ENCODE measurements at regions of chr1 and their contacts with region 1.

Region 1: GRCh38 chr1:114282751-114283403 is 129.2 kb upstream of the SYT6 start:
- DNase-seq: peak; percentile 84 to 90
- H3K4me3 ChIP-seq: no peak overlapping the region
- H3K27ac ChIP-seq: no peak overlapping the region
- H3K4me1 ChIP-seq: no peaks in the 10 kb centered on the region
- H3K27me3 ChIP-seq: no peaks in the 10 kb centered on the region
- CTCF ChIP-seq: peak; percentile 46 to 90 (median 78)
- POLR2A ChIP-seq: no peak

Region 2: DNA sequence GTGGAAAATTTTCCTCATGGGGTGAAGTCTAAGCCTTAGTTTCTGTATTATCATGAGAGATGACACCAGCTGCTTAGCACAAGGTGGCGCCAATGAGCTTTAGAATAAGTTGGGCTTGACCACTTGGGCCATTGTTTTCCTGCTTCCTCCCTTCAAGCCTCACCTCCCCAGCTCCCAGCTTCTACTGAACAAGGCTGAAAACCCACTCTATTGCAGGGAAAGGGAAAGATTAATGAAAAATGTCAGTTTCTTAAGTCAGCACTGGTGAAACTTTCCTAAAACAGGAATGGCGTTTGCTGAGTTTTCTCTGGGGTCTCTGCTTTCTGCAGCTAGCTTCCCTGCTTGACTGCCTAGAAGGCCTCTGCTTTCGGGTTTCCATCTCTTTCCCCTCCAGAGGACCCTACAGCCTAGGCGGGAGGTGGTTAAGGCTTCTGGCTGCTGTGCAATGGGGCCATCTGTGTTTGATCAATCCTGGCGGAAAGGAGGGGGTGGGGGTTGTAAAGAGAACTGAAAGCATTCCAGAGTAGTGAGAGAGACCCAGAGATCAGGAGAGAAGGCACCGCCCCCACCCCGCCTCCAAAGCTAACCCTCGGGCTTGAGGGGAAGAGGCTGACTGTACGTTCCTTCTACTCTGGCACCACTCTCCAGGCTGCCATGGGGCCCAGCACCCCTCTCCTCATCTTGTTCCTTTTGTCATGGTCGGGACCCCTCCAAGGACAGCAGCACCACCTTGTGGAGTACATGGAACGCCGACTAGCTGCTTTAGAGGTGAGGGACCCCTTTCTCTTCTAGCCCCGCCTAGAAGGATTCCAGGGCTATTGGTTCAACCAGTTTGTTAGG is 303.8 kb before region 1 on chr1 and contains the start of gene OLFML3:
- intact Hi-C with region 1: loop called (anchors 5 kb)
- DNase-seq: peak; percentile 87 to 92
- H3K4me3 ChIP-seq: no peak within 1 kb of the TSS
- H3K27ac ChIP-seq: peak within 1 kb of the TSS in 2 of 3 donors; percentile 38 to 56
- H3K4me1 ChIP-seq: peaks cover 41 to 57% of the 10 kb centered on the region in 2 donors
- H3K27me3 ChIP-seq: no peaks in the 10 kb centered on the region
- CTCF ChIP-seq: peak; percentile 53 to 84 (median 62)
- POLR2A ChIP-seq: no peak
- total RNA-seq, gene OLFML3: 20.2 to 28.3 (median 24.8) TPM

Region 3: DNA sequence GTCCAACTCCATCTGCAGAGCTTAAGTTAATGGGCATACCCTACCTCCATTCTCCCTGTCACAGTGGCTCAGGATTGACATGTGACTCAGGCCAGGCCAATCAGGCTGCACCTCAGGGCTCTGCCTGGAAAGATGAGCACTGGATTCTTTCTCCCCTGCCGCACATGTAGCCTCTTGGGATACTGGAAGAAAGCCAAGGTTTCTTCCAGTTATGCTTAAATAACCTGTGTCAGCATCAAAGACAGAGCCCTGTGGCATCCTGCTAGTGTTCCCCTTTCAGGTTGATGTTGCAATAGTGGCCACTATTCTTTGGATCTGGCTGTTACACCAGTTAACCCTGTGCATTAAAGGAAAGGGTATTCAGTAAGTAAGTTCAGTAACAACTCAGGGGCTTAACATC is 74.1 kb before region 1 on chr1:
- intact Hi-C with region 1: no loop called
- DNase-seq: no peak
- H3K4me3 ChIP-seq: no peak overlapping the region
- H3K27ac ChIP-seq: no peak overlapping the region
- H3K4me1 ChIP-seq: no peaks in the 10 kb centered on the region
- H3K27me3 ChIP-seq: no peaks in the 10 kb centered on the region
- CTCF ChIP-seq: no peak
- POLR2A ChIP-seq: no peak